T-cell (primary cell): ENCODE measurements at regions of chr5 and their contacts with region 1.

Region 1: GRCh38 chr5:132466433-132467286 is 23.9 kb downstream of the IRF1 start:
- DNase-seq: peak; percentile 56 to 85 (median 74)
- ATAC-seq: peak; percentile 58 to 84 (median 81)
- H3K4me3 ChIP-seq: peak overlapping the region; percentile 2 to 32
- H3K4me3 Mint-ChIP-seq: peak overlapping the region; percentile 65 to 77 (median 66)
- H3K27ac ChIP-seq: peak overlapping the region; percentile 95
- H3K27ac Mint-ChIP-seq: peak overlapping the region; percentile 97 to 100
- H3K4me1 ChIP-seq: peaks cover 56 to 91% of the 10 kb centered on the region in 2 experiments
- H3K4me1 Mint-ChIP-seq: peaks cover 94 to 99% (median 96%) of the 10 kb centered on the region in 3 donors
- H3K27me3 ChIP-seq: no peaks in the 10 kb centered on the region
- H3K27me3 Mint-ChIP-seq: no peaks in the 10 kb centered on the region

Region 2: GRCh38 chr5:132386644-132387286 is 79.9 kb before region 1 on chr5:
- CTCF ChIA-PET with region 1: interaction called, 4 to 15 read pairs
- POLR2A ChIA-PET with region 1: interaction called, 3 to 21 read pairs
- DNase-seq: peak; percentile 56 to 89 (median 72)
- ATAC-seq: peak; percentile 86 to 89 (median 88)
- H3K4me3 ChIP-seq: no peak overlapping the region
- H3K4me3 Mint-ChIP-seq: no peak overlapping the region
- H3K27ac ChIP-seq: no peak overlapping the region
- H3K27ac Mint-ChIP-seq: peak overlapping the region; percentile 60 to 78
- H3K4me1 ChIP-seq: peaks cover 2 to 19% of the 10 kb centered on the region in 2 experiments
- H3K4me1 Mint-ChIP-seq: peaks cover 32 to 57% (median 32%) of the 10 kb centered on the region in 3 donors
- H3K27me3 ChIP-seq: no peaks in the 10 kb centered on the region
- H3K27me3 Mint-ChIP-seq: no peaks in the 10 kb centered on the region

Region 3: GRCh38 chr5:132410451-132411381 is 55.9 kb before region 1 on chr5:
- CTCF ChIA-PET with region 1: interaction called in 1 of 2 experiments, 14 read pairs
- POLR2A ChIA-PET with region 1: interaction called, 3 to 4 read pairs
- DNase-seq: peak; percentile 67 to 93 (median 79)
- ATAC-seq: peak; percentile 70 to 77 (median 74)
- H3K4me3 ChIP-seq: peak overlapping the region; percentile 87 to 94
- H3K4me3 Mint-ChIP-seq: peak overlapping the region; percentile 98 to 99 (median 98)
- H3K27ac ChIP-seq: peak overlapping the region; percentile 98
- H3K27ac Mint-ChIP-seq: peak overlapping the region; percentile 99
- H3K4me1 ChIP-seq: peaks cover 19 to 52% of the 10 kb centered on the region in 2 experiments
- H3K4me1 Mint-ChIP-seq: peaks cover 73 to 85% (median 84%) of the 10 kb centered on the region in 3 donors
- H3K27me3 ChIP-seq: no peaks in the 10 kb centered on the region
- H3K27me3 Mint-ChIP-seq: no peaks in the 10 kb centered on the region

Region 4: GRCh38 chr5:132419502-132420468 is 46.9 kb before region 1 on chr5:
- CTCF ChIA-PET with region 1: interaction called, 3 to 14 read pairs
- POLR2A ChIA-PET with region 1: interaction called, 4 to 5 read pairs
- DNase-seq: peak in 31 of 35 experiments; percentile 27 to 82 (median 48)
- ATAC-seq: peak; percentile 65 to 72 (median 67)
- H3K4me3 ChIP-seq: no peak overlapping the region
- H3K4me3 Mint-ChIP-seq: peak overlapping the region; percentile 71 to 75 (median 74)
- H3K27ac ChIP-seq: peak overlapping the region; percentile 94
- H3K27ac Mint-ChIP-seq: peak overlapping the region; percentile 98 to 100
- H3K4me1 ChIP-seq: peaks cover 36 to 80% of the 10 kb centered on the region in 2 experiments
- H3K4me1 Mint-ChIP-seq: peaks cover 97 to 98% (median 98%) of the 10 kb centered on the region in 3 donors
- H3K27me3 ChIP-seq: no peaks in the 10 kb centered on the region
- H3K27me3 Mint-ChIP-seq: no peaks in the 10 kb centered on the region

Region 5: DNA sequence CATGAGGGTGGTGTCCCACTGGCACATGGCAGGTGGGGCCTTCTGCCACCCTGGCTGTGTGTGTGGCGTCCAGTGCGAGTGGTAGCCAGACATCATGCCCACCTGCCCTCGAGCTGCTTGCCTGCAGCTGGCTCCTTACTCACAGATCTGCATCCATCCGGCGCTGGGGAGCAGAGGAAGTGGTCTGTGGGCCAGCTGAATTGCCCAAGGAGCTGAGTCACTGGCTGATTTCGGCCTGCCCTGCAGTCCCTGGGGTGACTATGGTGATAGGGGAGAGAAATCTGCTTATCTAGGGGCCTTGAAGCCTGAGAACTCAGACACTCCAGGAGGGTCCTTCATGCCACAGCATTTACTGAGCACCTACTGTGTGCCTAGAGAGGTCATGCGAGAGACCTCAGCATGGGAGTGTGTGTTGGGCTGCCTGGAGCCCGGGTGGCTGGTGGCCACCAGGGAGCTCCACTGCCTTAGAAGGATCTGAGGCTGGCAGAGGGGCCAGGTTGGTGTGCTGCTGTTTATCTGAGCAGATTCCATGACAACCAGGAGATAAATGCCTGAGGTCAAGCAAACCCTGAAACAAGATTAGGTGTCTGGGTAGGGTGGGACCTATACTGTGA is 40.0 kb before region 1 on chr5:
- CTCF ChIA-PET with region 1: interaction called in 1 of 2 experiments, 25 read pairs
- POLR2A ChIA-PET with region 1: interaction called, 3 to 10 read pairs
- DNase-seq: peak; percentile 15 to 72 (median 44)
- ATAC-seq: peak; percentile 24 to 49 (median 38)
- H3K4me3 ChIP-seq: peak overlapping the region; percentile 2 to 17
- H3K4me3 Mint-ChIP-seq: peak overlapping the region; percentile 64 to 77 (median 68)
- H3K27ac ChIP-seq: peak overlapping the region; percentile 94
- H3K27ac Mint-ChIP-seq: peak overlapping the region; percentile 98 to 100
- H3K4me1 ChIP-seq: peaks cover 61 to 97% of the 10 kb centered on the region in 2 experiments
- H3K4me1 Mint-ChIP-seq: peaks cover 94 to 99% (median 98%) of the 10 kb centered on the region in 3 donors
- H3K27me3 ChIP-seq: no peaks in the 10 kb centered on the region
- H3K27me3 Mint-ChIP-seq: no peaks in the 10 kb centered on the region

Region 6: GRCh38 chr5:132495667-132496190 is 29.1 kb after region 1 on chr5:
- CTCF ChIA-PET with region 1: interaction called, 5 to 18 read pairs
- POLR2A ChIA-PET with region 1: interaction called, 15 to 111 read pairs
- DNase-seq: peak in 33 of 35 experiments; percentile 47 to 78 (median 61)
- ATAC-seq: peak; percentile 35 to 46 (median 38)
- H3K4me3 ChIP-seq: peak overlapping the region; percentile 61 to 93
- H3K4me3 Mint-ChIP-seq: peak overlapping the region; percentile 92 to 96 (median 93)
- H3K27ac ChIP-seq: peak overlapping the region; percentile 92
- H3K27ac Mint-ChIP-seq: peak overlapping the region; percentile 96 to 99
- H3K4me1 ChIP-seq: peaks cover 26 to 80% of the 10 kb centered on the region in 2 experiments
- H3K4me1 Mint-ChIP-seq: peaks cover 69 to 76% (median 74%) of the 10 kb centered on the region in 3 donors
- H3K27me3 ChIP-seq: no peaks in the 10 kb centered on the region
- H3K27me3 Mint-ChIP-seq: no peaks in the 10 kb centered on the region

Region 7: DNA sequence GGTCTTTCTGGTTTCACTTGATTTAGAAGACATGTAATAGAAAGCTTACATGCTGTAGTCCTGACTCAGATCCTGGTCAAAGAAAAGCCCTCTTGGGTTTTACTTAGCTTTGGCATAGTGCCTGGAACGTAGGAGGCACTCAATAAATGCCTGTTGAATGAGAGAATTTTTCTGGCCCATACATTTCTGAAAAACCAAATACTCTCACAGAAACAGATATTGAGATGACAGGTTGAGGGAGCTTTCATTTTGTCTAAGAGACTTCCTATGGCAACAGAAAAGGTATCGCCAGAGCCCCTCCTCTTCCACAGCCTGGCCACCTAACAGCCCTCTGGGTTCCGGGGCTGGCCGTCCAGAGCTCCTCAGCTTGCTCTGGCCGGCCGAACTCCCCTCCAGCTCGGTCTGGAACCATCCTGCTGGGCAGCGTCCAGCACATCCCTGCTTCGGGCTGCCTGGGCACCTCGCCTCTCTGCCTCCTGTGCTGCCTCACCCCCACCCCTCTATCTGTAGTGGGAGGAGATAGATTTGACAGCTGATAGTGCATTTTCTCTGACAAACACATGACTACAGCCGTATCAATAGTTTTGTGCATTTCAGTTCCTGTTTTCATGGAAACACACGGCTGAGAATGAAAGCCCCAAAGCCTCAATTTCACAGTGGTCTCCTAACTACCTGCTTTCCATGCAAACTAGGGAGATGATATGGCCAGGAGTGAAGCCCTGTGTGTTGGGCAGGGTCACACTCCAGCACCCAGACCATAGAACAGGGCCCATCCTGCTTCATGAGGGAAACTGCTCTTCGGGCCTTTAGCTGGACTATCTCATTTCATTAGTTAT is 208.2 kb after region 1 on chr5:
- CTCF ChIA-PET with region 1: interaction called in 1 of 2 experiments, 11 read pairs
- POLR2A ChIA-PET with region 1: no interaction called
- DNase-seq: no peak
- ATAC-seq: peak in 3 of 4 experiments; percentile 31 to 66 (median 35)
- H3K4me3 ChIP-seq: no peak overlapping the region
- H3K4me3 Mint-ChIP-seq: peak overlapping the region in 2 of 3 donors; percentile 25 to 57
- H3K27ac ChIP-seq: no peak overlapping the region
- H3K27ac Mint-ChIP-seq: peak overlapping the region; percentile 61 to 62
- H3K4me1 ChIP-seq: peaks cover 0 to 11% of the 10 kb centered on the region in 2 experiments
- H3K4me1 Mint-ChIP-seq: peaks cover 0 to 22% (median 0%) of the 10 kb centered on the region in 3 donors
- H3K27me3 ChIP-seq: no peaks in the 10 kb centered on the region
- H3K27me3 Mint-ChIP-seq: no peaks in the 10 kb centered on the region